MCF 10A (cell line): ENCODE measurements at regions of chr1 and their contacts with region 1.

Region 1: GRCh38 chr1:205141236-205142101 is 19.7 kb upstream of the RBBP5 start:
- DNase-seq: peak; percentile 91
- H3K4me3 Mint-ChIP-seq: no peak overlapping the region
- H3K27ac Mint-ChIP-seq: no peak overlapping the region
- H3K4me1 Mint-ChIP-seq: peaks cover 19% of the 10 kb centered on the region
- H3K27me3 Mint-ChIP-seq: no peaks in the 10 kb centered on the region
- CTCF ChIP-seq: peak; percentile 82

Region 2: GRCh38 chr1:204975570-204976235 is 165.8 kb before region 1 on chr1:
- CTCF ChIA-PET with region 1: interaction called, 56 read pairs
- POLR2A ChIA-PET with region 1: interaction called, 6 read pairs
- intact Hi-C with region 1: loop called (anchors 1 kb)
- DNase-seq: peak; percentile 78
- H3K4me3 Mint-ChIP-seq: no peak overlapping the region
- H3K27ac Mint-ChIP-seq: no peak overlapping the region
- H3K4me1 Mint-ChIP-seq: peaks cover 8% of the 10 kb centered on the region
- H3K27me3 Mint-ChIP-seq: peaks cover 58% of the 10 kb centered on the region
- CTCF ChIP-seq: peak; percentile 99

Region 3: DNA sequence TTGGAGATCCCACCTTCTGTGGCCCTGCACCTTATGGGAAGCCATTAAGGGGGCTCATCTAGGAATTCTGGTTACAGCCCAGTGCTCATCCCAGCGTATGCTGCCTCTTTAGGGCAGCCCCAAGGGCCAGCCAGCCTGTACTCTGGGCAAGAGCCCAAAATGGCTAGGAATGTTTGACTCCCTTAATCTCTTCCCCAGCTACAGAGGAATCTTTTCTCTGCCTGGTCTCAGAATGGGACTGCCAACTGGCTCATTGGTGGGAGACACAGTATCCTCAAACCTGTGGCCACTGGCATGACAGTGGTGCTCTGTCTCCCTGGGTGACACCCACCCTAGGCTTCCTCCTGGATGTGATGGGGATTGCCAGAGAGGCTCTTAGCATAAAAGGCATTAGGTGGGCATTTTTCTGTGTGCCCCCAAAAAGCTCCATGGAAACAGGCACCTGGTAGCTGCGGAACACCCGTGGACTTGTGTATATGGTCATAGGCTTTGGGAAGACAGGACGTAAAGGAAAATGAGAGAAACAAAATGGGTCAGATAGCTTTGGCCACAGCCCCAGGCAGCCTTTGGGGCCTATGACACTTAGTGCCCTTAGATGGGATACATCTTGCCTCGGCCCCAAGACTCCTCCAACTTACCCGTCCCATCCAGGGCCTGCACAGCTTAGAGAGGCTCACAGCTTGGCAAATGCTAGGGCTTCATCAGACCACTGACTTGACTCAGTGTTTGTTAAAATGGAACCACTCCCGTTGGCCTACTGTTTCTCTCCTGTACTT is 64.1 kb before region 1 on chr1:
- CTCF ChIA-PET with region 1: interaction called, 11 read pairs
- POLR2A ChIA-PET with region 1: no interaction called
- intact Hi-C with region 1: no loop called
- DNase-seq: no peak
- H3K4me3 Mint-ChIP-seq: no peak overlapping the region
- H3K27ac Mint-ChIP-seq: no peak overlapping the region
- H3K4me1 Mint-ChIP-seq: peaks cover 28% of the 10 kb centered on the region
- H3K27me3 Mint-ChIP-seq: no peaks in the 10 kb centered on the region
- CTCF ChIP-seq: no peak

Region 4: GRCh38 chr1:205111354-205111753 is 30.1 kb before region 1 on chr1:
- CTCF ChIA-PET with region 1: interaction called, 231 read pairs
- POLR2A ChIA-PET with region 1: interaction called, 4 read pairs
- intact Hi-C with region 1: no loop called
- DNase-seq: no peak
- H3K4me3 Mint-ChIP-seq: no peak overlapping the region
- H3K27ac Mint-ChIP-seq: no peak overlapping the region
- H3K4me1 Mint-ChIP-seq: no peaks in the 10 kb centered on the region
- H3K27me3 Mint-ChIP-seq: no peaks in the 10 kb centered on the region
- CTCF ChIP-seq: no peak

Region 5: DNA sequence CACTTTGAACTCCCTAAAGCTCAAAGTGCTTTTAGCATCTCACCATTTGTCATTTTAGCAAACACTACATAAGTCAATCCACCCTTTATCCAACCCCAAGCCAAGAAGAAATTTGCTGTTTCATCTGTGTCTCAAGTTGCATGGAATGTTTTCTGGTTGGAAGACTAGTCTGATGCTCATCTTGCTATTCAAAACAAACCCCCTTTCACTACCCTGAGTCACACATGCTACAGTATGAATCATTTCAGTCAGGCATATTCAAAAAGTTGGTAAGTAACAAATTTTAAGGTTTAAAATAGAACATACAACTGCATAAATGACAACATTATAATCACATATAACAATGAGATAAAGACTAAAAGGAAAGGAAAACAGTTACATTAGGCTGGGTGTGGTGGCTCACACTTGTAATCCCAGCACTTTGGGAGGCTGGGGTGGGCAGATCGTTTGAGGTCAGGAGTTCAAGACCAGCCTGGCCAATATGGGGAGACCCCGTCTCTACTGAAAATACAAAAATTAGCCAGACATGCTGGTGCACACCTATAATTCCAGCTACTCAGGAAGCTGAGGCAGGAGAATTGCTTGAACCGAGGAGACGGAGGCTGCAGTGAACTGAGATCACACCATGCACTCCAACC is 31.4 kb after region 1 on chr1:
- CTCF ChIA-PET with region 1: interaction called, 26 read pairs
- POLR2A ChIA-PET with region 1: interaction called, 6 read pairs
- intact Hi-C with region 1: no loop called
- DNase-seq: peak; percentile 93
- H3K4me3 Mint-ChIP-seq: no peak overlapping the region
- H3K27ac Mint-ChIP-seq: peak overlapping the region; percentile 95
- H3K4me1 Mint-ChIP-seq: peaks cover 15% of the 10 kb centered on the region
- H3K27me3 Mint-ChIP-seq: no peaks in the 10 kb centered on the region
- CTCF ChIP-seq: no peak

Region 6: DNA sequence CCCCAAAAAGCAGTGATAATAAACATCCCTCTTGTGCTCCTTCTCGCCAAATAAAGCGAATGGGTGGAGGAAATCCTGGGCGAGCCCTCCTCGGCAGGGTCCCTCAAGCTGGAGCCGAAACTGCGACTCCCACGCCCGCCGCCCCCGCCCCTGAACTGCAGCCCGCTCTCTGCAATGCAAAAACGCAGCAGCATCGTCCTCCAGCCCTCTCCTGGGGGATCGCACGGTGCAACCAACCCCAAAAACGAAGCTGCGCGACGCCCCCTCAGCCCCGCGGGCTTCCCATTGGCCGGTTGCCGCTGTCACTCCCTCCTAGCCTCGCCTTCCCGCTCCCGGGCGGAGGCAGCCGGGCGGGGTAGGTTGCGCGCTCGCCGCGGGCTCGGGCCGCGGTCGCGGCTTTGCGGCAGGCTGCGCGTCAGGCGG is 86.1 kb after region 1 on chr1 and contains the start of gene TMCC2:
- CTCF ChIA-PET with region 1: interaction called, 33 read pairs
- POLR2A ChIA-PET with region 1: interaction called, 11 read pairs
- intact Hi-C with region 1: loop called (anchors 5 kb)
- DNase-seq: peak; percentile 91
- H3K4me3 Mint-ChIP-seq: peak within 1 kb of the TSS; percentile 63
- H3K27ac Mint-ChIP-seq: no peak within 1 kb of the TSS
- H3K4me1 Mint-ChIP-seq: peaks cover 20% of the 10 kb centered on the region
- H3K27me3 Mint-ChIP-seq: no peaks in the 10 kb centered on the region
- CTCF ChIP-seq: no peak
- total RNA-seq, gene TMCC2: 0.54 and 0.79 TPM in 2 replicates